ENCODE measurements at regions of chr21 and their contacts with region 1.

Region 1: DNA sequence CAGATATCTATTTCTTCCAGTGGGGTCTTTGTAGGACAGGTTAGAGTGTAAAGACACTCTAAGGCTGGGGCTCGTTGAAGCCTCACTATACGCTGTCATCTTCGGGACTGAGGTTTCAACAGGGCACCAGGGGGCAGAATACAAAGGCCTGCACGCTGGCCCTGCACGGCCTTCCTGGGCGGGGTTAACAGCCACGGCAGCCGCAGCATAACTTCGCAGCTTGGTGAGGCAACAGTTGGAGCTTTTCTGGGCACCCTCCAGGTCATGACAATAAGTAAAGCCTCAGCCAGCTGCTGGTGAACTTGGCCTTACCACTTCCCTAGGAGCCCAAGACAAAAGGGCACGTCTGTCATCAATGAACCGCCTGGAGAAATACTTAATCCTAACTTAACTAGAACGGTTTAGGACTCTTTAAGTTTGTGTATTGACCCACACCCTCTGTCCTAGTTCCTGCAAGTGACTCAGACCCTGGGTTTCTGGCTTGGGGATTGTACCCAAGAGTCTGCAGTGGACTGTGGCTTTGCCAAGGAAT is 2.3 kb upstream of the RUNX1 start:
- DNase-seq: peak; percentile 91
- H3K4me3 Mint-ChIP-seq: peak overlapping the region; percentile 16
- H3K27ac Mint-ChIP-seq: peak overlapping the region; percentile 97
- H3K4me1 Mint-ChIP-seq: peaks cover 59% of the 10 kb centered on the region
- H3K27me3 Mint-ChIP-seq: no peaks in the 10 kb centered on the region

Region 2: DNA sequence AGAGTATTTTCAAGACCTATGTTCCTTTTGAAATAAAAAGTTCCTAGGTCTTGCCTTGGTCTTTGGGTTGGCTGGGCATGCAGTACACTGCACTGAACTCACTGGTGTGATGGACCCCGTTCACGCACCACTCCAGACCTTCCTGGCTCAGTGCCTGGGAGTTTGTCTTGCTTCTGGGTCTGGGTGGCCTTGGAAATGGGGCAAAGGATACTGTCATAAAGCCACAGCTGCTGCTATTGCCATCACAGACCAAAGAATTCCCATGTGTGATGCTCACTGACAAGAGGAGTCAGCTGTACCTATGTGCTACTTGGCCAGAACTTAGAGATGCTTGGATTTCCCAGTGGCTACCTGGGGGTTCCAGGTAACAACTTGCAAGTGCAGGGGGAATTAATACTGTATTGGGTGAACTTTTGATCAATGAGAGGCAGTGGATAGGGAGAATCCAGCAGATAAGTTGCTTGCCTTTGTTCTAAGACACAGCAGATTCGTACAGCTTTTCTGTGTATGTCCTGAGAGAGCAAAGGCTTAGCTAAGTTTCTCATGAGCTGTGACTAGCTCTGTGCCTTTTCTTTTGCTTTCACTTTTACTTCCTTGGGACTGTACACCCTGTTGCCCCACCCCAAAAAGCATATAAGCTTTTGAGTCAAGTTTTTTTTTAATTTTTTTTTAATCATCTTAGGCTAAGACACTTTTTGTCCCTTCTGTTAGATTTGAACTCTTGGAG is 117.6 kb before region 1 on chr21:
- CTCF ChIA-PET with region 1: interaction called, 7 read pairs
- intact Hi-C with region 1: loop called (anchors 1 kb)
- DNase-seq: peak; percentile 51
- H3K4me3 Mint-ChIP-seq: peak overlapping the region; percentile 77
- H3K27ac Mint-ChIP-seq: peak overlapping the region; percentile 97
- H3K4me1 Mint-ChIP-seq: peaks cover 80% of the 10 kb centered on the region
- H3K27me3 Mint-ChIP-seq: no peaks in the 10 kb centered on the region

Region 3: DNA sequence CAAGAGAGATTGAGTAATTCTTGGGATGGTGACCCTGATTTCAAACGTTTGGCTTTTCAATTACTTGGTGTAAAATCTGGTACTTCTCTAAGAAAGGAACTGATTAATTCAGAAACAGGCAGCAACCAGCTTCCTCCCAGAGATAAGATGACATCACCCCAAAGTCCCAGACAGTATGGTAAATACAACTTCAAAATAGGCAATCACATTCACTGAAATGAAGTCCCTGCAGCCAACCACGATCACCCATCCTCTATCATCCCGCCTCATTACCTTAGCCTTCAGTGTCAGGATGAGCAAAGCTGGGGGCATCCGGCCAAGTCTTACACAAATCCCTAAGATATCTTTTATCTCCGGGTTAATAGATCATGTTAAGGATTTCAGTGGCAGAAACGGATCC is 24.2 kb after region 1 on chr21:
- CTCF ChIA-PET with region 1: interaction called, 4 read pairs
- intact Hi-C with region 1: loop called (anchors 1 kb)
- DNase-seq: peak; percentile 61
- H3K4me3 Mint-ChIP-seq: no peak overlapping the region
- H3K27ac Mint-ChIP-seq: no peak overlapping the region
- H3K4me1 Mint-ChIP-seq: peaks cover 15% of the 10 kb centered on the region
- H3K27me3 Mint-ChIP-seq: peaks cover 2% of the 10 kb centered on the region

Region 4: GRCh38 chr21:35150562-35151226 is 99.3 kb after region 1 on chr21:
- CTCF ChIA-PET with region 1: no interaction called
- intact Hi-C with region 1: loop called (anchors 2 kb)
- DNase-seq: no peak
- H3K4me3 Mint-ChIP-seq: no peak overlapping the region
- H3K27ac Mint-ChIP-seq: peak overlapping the region; percentile 91
- H3K4me1 Mint-ChIP-seq: peaks cover 52% of the 10 kb centered on the region
- H3K27me3 Mint-ChIP-seq: no peaks in the 10 kb centered on the region

Region 5: GRCh38 chr21:35333831-35334618 is 282.7 kb after region 1 on chr21:
- CTCF ChIA-PET with region 1: no interaction called
- intact Hi-C with region 1: no loop called
- DNase-seq: no peak
- H3K4me3 Mint-ChIP-seq: no peak overlapping the region
- H3K27ac Mint-ChIP-seq: no peak overlapping the region
- H3K4me1 Mint-ChIP-seq: peaks cover 25% of the 10 kb centered on the region
- H3K27me3 Mint-ChIP-seq: no peaks in the 10 kb centered on the region

Region 6: GRCh38 chr21:35400233-35400957 is 349.0 kb after region 1 on chr21:
- CTCF ChIA-PET with region 1: interaction called, 6 read pairs
- intact Hi-C with region 1: loop called (anchors 1 kb)
- DNase-seq: peak; percentile 58
- H3K4me3 Mint-ChIP-seq: peak overlapping the region; percentile 22
- H3K27ac Mint-ChIP-seq: peak overlapping the region; percentile 27
- H3K4me1 Mint-ChIP-seq: peaks cover 24% of the 10 kb centered on the region
- H3K27me3 Mint-ChIP-seq: no peaks in the 10 kb centered on the region